ENCODE measurements at regions of chr6 and their contacts with region 1.

Region 1: GRCh38 chr6:170049641-170050561 is 241.0 kb downstream of the DLL1 start:
- DNase-seq: peak; percentile 88 to 92
- ATAC-seq: peak; percentile 91 to 95
- H3K4me3 ChIP-seq: no peak overlapping the region
- H3K27ac ChIP-seq: peak overlapping the region; percentile 52 to 67 (median 60)
- H3K4me1 ChIP-seq: peaks cover 23 to 27% of the 10 kb centered on the region in 2 donors
- H3K27me3 ChIP-seq: peaks cover 0 to 5% (median 0%) of the 10 kb centered on the region in 3 donors
- CTCF ChIP-seq: no peak
- POLR2A ChIP-seq: peak; percentile 18 to 23

Region 2: GRCh38 chr6:170011204-170012036 is 38.5 kb before region 1 on chr6:
- in situ Hi-C with region 1: no loop called
- intact Hi-C with region 1: no loop called
- DNase-seq: peak in 1 of 2 donors; percentile 27
- ATAC-seq: peak; percentile 53 to 77
- H3K4me3 ChIP-seq: peak overlapping the region in 1 of 4 donors; percentile 25
- H3K27ac ChIP-seq: peak overlapping the region in 2 of 4 donors; percentile 1 to 29
- H3K4me1 ChIP-seq: peaks cover 10 to 11% of the 10 kb centered on the region in 2 donors
- H3K27me3 ChIP-seq: no peaks in the 10 kb centered on the region
- CTCF ChIP-seq: no peak
- POLR2A ChIP-seq: no peak

Region 3: GRCh38 chr6:170030821-170031471 is 19.0 kb before region 1 on chr6:
- in situ Hi-C with region 1: no loop called
- intact Hi-C with region 1: no loop called
- DNase-seq: peak in 1 of 2 donors; percentile 5
- ATAC-seq: no peak
- H3K4me3 ChIP-seq: no peak overlapping the region
- H3K27ac ChIP-seq: no peak overlapping the region
- H3K4me1 ChIP-seq: peaks cover 0 to 6% of the 10 kb centered on the region in 2 donors
- H3K27me3 ChIP-seq: no peaks in the 10 kb centered on the region
- CTCF ChIP-seq: no peak
- POLR2A ChIP-seq: no peak

Region 4: GRCh38 chr6:170129691-170130171 is 79.8 kb after region 1 on chr6:
- in situ Hi-C with region 1: no loop called
- intact Hi-C with region 1: loop called (anchors 2 kb)
- DNase-seq: peak; percentile 53 to 73
- ATAC-seq: peak; percentile 60 to 64
- H3K4me3 ChIP-seq: no peak overlapping the region
- H3K27ac ChIP-seq: peak overlapping the region; percentile 38 to 73 (median 51)
- H3K4me1 ChIP-seq: peaks cover 30 to 33% of the 10 kb centered on the region in 2 donors
- H3K27me3 ChIP-seq: no peaks in the 10 kb centered on the region
- CTCF ChIP-seq: no peak
- POLR2A ChIP-seq: no peak

Region 5: DNA sequence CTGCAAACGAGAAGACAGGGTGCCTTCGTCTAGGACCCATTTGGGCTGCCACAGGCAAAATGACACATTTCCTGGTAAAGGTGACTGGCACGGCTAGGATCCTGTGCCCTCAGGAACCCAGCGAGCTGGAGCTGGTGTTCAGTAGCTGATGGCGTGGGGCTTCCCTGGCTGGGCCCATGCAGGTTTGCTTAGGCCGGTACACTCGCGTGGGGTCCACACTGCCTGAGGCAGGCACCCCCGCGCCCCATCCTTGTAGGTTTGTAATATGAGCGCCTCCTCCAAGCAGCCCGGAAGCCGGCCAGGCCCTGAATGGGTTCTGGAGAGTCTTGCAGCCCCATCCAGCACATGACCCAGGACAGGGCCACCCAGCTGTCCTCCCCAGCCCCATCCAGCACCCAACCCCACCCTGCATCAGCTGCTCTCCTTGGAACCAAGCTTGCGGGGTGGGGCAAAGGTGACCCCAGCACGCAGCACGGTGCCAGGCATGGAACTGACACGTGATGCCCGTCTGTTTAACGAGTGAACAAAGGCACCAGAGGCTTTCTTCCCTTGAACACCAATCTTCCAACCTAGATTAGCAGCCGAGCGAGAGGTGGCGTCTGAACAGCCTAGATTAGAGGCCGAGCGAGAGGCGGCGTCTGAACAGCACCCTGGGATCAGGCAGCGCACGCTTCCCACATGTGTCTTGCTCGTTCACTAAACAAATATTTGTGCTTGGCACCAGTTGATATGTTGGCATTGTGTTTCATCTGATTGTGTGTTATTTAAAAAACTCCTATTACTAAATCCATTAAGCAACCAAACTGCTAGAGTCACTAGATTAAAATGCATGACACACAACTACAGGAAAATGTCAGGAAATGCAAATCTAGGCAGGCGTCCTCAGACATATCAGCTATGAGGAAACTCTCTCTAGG is 128.9 kb after region 1 on chr6:
- in situ Hi-C with region 1: no loop called
- intact Hi-C with region 1: loop called (anchors 2 kb)
- DNase-seq: peak; percentile 75 to 82
- ATAC-seq: peak; percentile 67 to 81
- H3K4me3 ChIP-seq: no peak overlapping the region
- H3K27ac ChIP-seq: peak overlapping the region; percentile 28 to 77 (median 60)
- H3K4me1 ChIP-seq: peaks cover 23 to 26% of the 10 kb centered on the region in 2 donors
- H3K27me3 ChIP-seq: no peaks in the 10 kb centered on the region
- CTCF ChIP-seq: no peak
- POLR2A ChIP-seq: no peak

Region 6: DNA sequence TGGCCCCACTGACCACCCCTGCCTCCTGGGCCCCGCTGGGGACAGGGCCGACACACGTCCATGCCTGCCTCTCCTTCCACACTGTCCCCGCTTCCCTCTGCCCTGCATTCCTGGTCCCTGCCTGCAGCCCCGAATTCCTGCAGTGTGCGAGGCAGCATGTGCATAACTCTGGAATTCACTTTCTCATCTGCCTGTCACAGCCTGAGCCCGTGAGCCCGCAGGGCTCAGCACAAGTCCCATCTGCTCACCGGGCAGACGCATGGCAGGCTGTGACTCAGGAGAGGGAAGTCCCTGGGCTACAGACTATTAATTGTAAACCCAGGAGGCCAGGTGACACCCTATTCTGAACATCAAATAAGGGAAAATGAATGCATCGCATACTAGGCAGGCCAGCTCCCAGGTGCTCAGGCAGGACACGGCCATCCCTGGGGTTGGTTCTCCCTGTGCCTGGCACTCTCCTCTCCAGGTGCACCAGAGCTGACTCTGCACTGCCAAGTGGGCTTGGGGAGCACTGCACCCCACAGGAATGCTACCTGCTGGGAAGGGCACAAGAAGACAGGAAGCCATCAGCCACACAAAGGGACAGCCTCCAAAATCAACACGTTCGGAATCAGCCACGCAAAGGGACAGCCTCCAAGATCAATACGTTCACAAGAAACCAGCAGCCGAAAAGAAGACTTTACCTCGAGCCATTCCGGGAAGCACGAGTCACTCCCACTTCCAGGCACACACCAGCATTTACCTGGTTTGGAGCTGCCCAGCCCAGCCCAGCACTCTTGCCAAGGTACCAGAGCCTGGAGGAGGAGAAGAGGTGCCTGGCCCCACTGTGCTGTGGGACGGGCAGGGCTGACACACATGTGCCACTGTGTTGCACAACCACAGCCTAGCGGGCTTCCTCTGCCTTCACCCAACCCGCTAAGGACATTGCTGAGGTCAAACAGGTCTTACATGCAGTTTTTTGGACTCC is 175.1 kb after region 1 on chr6:
- in situ Hi-C with region 1: no loop called
- intact Hi-C with region 1: loop called (anchors 1 kb)
- DNase-seq: peak; percentile 34 to 67
- ATAC-seq: peak in 1 of 2 donors; percentile 47
- H3K4me3 ChIP-seq: no peak overlapping the region
- H3K27ac ChIP-seq: peak overlapping the region in 3 of 4 donors; percentile 51 to 73 (median 67)
- H3K4me1 ChIP-seq: peaks cover 13 to 31% of the 10 kb centered on the region in 2 donors
- H3K27me3 ChIP-seq: no peaks in the 10 kb centered on the region
- CTCF ChIP-seq: no peak
- POLR2A ChIP-seq: no peak

Region 7: GRCh38 chr6:170279977-170280688 is 230.2 kb after region 1 on chr6:
- in situ Hi-C with region 1: loop called in 1 of 4 experiments (anchors 25 kb)
- intact Hi-C with region 1: loop called (anchors 1 kb)
- DNase-seq: peak; percentile 66 to 85
- ATAC-seq: peak; percentile 89 to 92
- H3K4me3 ChIP-seq: peak overlapping the region; percentile 33 to 58 (median 44)
- H3K27ac ChIP-seq: peak overlapping the region; percentile 86 to 90 (median 88)
- H3K4me1 ChIP-seq: peaks cover 22 to 26% of the 10 kb centered on the region in 2 donors
- H3K27me3 ChIP-seq: no peaks in the 10 kb centered on the region
- CTCF ChIP-seq: peak in 1 of 5 experiments; percentile 20
- POLR2A ChIP-seq: peak in 1 of 2 donors; percentile 22

Region 8: DNA sequence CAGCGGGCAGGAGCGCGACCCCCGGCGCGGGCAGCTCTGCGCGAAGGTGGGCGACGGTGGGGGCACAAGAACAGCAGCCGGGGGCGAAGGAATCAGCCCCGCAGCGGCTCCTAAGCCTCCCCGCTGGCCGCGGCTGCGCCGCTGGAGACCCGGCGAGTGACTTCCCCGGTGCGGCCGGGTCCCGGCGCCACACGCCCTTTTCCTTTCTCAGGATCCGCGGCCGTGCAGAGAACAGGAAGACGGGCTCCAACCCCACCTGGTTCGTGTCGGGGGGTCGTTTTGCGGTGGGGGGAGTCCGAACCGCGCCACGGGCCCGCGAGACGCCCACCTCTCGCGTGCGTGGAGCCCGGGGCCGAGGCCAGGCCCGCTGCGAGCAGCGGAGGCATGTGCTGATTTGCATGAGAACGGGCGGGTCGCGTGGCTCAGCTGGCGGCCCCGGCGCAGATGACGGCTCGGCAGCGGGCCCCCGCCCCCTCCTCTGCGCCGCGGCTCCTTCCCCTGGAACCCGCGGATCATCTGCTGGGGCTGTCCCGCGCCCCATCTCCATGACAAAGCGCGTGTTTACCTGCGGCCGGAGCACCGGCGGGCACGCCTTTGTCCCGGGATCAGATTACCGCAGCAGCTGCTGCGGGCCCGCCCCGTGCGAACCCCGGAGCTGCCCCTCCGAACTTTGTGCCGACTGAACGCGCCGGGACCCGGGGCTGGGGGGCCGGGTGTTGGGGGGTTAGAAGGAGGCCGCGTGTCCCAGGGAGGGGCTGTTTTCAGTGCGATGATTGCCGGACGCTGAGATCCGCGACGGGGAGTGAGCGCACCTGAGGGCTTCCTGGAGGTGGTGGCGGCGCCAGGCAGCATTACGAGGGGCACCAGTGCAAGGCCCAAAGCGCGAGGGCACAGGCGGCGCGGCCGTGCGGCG is 245.9 kb after region 1 on chr6:
- in situ Hi-C with region 1: loop called in 1 of 4 experiments (anchors 25 kb)
- intact Hi-C with region 1: no loop called
- DNase-seq: no peak
- ATAC-seq: peak; percentile 17 to 26
- H3K4me3 ChIP-seq: peak overlapping the region; percentile 51 to 77 (median 62)
- H3K27ac ChIP-seq: no peak overlapping the region
- H3K4me1 ChIP-seq: peaks cover 16 to 30% of the 10 kb centered on the region in 2 donors
- H3K27me3 ChIP-seq: peaks cover 60 to 66% (median 64%) of the 10 kb centered on the region in 3 donors
- CTCF ChIP-seq: no peak
- POLR2A ChIP-seq: peak in 1 of 2 donors; percentile 20

Region 9: GRCh38 chr6:170561561-170562220 is 511.8 kb after region 1 on chr6:
- in situ Hi-C with region 1: no loop called
- intact Hi-C with region 1: no loop called
- DNase-seq: no peak
- ATAC-seq: no peak
- H3K4me3 ChIP-seq: no peak overlapping the region
- H3K27ac ChIP-seq: no peak overlapping the region
- H3K4me1 ChIP-seq: no peaks in the 10 kb centered on the region
- H3K27me3 ChIP-seq: no peaks in the 10 kb centered on the region
- CTCF ChIP-seq: no peak
- POLR2A ChIP-seq: no peak

Measured in gastrocnemius medialis (tissue), 4 donors.